ENCODE measurements at regions of chr3 and their contacts with region 1.

Region 1: GRCh38 chr3:49339945-49340800 is at the start of gene USP4:
- DNase-seq: peak; percentile 96
- total RNA-seq, gene USP4: 44.5 TPM

Region 2: DNA sequence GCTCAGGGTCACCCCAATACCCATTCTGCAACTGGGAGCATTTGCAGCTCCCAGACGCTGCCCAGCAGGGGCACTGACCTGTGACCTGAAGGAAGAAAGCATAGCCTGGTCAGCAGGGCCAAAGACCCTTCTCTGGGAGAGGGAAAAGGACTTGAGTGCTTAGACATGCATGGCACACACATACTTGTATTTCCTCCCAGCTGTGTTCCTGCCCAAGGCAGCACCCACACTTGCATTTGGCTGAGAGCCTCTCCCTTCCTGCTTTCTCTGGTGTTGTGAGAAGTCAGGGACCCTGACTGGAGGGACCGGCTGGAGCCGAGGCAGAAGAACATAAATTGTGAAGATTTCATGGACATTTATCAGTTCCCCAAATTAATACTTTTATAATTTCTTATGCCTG is 200.1 kb before region 1 on chr3:
- intact Hi-C with region 1: no loop called
- DNase-seq: no peak

Region 3: DNA sequence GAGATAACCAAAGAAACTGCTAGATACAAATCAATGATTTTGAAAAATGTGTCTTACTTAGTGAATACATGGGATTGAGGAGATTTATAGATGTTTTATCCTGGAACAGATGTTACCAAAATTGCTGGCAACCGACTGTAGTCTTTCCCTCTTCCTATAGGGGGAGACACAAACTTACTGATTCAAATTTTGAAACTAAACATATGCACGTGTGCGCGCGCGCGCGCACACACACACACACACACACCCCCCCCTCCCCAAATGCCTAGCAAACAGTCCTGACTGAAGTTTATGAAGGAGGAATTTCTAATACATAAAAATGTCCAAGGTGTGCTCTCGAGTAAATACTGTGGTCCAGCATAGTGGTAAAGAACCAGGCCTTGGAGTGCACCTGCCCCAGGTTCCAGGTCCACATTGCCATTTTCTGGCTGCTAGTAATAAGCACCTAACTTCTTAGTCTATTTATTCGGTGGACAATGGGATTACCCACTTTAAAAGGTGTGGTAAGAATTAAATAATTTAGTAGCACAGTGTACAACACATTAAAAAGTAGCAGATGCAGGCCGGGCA is 44.6 kb before region 1 on chr3:
- intact Hi-C with region 1: loop called (anchors 5 kb)
- DNase-seq: no peak

Region 4: DNA sequence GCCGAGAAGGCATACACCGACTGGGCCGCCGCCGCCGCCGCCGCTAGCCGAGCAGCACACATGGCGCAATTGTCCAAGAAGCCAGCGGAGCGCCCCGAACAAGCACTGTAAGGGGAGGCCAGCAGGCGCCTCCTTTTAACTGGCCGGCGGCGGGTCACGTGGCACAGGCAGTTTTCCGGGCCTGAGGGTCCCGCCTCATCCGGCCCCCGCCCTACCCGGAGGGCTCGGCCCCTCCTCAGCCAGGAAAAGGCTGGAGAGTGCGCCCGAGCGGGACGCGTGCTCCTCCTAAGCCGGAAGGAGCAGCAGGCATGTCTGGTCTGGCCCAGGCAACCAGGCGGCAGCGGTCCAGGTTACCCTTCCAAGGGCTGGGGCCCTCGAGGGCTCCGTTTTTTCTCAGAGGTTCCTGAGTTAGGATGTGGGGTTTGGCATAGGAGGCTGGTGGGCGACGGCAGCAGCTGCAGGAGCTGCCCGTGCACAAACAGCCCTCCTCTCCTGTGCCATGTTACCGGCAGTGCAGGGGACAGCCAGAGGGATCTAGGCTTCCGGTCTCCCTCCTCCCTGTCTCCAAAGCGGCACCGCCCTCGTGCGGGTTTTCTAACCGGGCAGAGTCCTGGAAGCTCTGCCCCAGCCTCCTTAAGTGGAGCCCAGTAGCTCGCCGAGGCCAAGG is 18.2 kb after region 1 on chr3 and contains the start of gene GPX1:
- intact Hi-C with region 1: loop called (anchors 1 kb)
- DNase-seq: peak; percentile 97
- total RNA-seq, gene GPX1: 106 TPM

Region 5: GRCh38 chr3:49411968-49412631 is 71.9 kb after region 1 on chr3 and contains the starts of genes RHOA and TCTA:
- intact Hi-C with region 1: loop called (anchors 5 kb)
- DNase-seq: peak; percentile 99
- total RNA-seq, gene RHOA: 340 TPM
- total RNA-seq, gene TCTA: 26.5 TPM

Region 6: GRCh38 chr3:49428697-49429100 is 88.5 kb after region 1 on chr3:
- intact Hi-C with region 1: loop called (anchors 5 kb)
- DNase-seq: no peak

Region 7: DNA sequence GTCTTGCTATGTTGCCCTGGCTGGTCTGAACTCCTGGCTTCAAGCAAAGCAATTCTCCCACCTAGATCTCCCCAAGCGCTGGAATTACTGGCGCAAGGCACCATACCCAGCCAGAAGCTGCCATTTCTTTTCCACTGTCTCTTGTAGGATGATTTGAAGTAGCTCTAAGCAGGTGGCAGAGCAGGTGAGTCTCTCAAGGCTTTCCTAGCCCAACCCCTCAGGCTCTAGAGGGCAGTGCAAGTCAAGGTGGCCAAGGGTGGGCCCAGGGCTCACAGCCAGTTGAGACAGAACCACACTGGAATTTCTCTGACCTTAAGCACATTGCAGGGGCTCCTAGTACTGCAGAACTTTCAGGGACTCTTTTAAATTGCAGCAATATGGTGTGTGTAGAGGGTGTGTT is 114.3 kb after region 1 on chr3:
- intact Hi-C with region 1: loop called (anchors 1 kb)
- DNase-seq: no peak

Region 8: GRCh38 chr3:49769286-49769915 is 429.2 kb after region 1 on chr3:
- intact Hi-C with region 1: no loop called
- DNase-seq: no peak

Region 9: GRCh38 chr3:50138266-50139200 is 798.4 kb after region 1 on chr3:
- intact Hi-C with region 1: no loop called
- DNase-seq: no peak